ENCODE measurements at regions of chr12 and their contacts with region 1.

Region 1: GRCh38 chr12:53508534-53509199 is 1.4 kb upstream of the NPFF start:
- DNase-seq: peak; percentile 96
- H3K4me3 Mint-ChIP-seq: no peak overlapping the region
- H3K27ac Mint-ChIP-seq: peak overlapping the region; percentile 46
- H3K4me1 Mint-ChIP-seq: peaks cover 10% of the 10 kb centered on the region
- H3K27me3 Mint-ChIP-seq: no peaks in the 10 kb centered on the region

Region 2: DNA sequence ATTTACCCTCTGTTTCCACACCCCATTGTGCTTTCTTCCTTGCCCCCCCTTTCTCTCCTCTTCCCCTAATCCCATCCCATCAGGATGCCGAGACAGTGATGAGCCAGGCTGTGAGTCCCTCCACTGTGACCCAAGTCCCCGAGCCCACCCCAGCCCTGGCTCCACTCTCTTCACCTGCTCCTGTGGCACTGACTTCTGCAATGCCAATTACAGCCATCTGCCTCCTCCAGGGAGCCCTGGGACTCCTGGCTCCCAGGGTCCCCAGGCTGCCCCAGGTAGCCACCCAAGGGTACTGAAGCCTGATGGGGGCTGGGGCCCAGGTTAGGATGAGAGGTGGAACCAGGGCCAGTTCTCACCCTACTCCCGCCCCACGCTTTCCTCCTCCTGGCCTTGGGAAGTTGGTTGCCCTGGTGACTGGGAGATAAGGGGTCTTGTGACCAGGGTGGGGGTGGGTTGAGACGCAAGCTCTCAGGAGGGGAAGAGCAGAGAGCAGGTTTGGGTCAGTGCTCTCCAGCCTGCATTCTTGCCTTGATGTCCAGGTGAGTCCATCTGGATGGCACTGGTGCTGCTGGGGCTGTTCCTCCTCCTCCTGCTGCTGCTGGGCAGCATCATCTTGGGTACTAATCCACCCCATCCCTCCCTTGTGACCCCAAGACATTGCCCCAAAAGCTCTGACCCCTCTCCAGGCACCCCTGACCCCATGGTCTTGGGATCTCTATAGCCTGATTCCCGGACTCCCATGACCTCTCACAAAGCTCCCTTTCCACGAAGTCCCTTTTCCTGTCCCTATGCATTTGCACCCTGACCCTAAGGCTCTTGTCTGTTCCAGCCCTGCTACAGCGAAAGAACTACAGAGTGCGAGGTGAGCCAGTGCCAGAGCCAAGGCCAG is 83.8 kb before region 1 on chr12:
- intact Hi-C with region 1: loop called (anchors 1 kb)
- DNase-seq: no peak
- H3K4me3 Mint-ChIP-seq: no peak overlapping the region
- H3K27ac Mint-ChIP-seq: no peak overlapping the region
- H3K4me1 Mint-ChIP-seq: peaks cover 11% of the 10 kb centered on the region
- H3K27me3 Mint-ChIP-seq: no peaks in the 10 kb centered on the region

Region 3: GRCh38 chr12:53523131-53523530 is 14.5 kb after region 1 on chr12:
- intact Hi-C with region 1: no loop called
- DNase-seq: no peak
- H3K4me3 Mint-ChIP-seq: no peak overlapping the region
- H3K27ac Mint-ChIP-seq: no peak overlapping the region
- H3K4me1 Mint-ChIP-seq: no peaks in the 10 kb centered on the region
- H3K27me3 Mint-ChIP-seq: no peaks in the 10 kb centered on the region

Measured in activated CD4-positive, alpha-beta T cell treated with anti-CD3 and anti-CD28 coated beads, Interleukin-2, amount 10 ng/mL, durations not matched to agents 24 days and 14 days (primary cell).